ENCODE measurements at regions of chr1 and their contacts with region 1.

Region 1: DNA sequence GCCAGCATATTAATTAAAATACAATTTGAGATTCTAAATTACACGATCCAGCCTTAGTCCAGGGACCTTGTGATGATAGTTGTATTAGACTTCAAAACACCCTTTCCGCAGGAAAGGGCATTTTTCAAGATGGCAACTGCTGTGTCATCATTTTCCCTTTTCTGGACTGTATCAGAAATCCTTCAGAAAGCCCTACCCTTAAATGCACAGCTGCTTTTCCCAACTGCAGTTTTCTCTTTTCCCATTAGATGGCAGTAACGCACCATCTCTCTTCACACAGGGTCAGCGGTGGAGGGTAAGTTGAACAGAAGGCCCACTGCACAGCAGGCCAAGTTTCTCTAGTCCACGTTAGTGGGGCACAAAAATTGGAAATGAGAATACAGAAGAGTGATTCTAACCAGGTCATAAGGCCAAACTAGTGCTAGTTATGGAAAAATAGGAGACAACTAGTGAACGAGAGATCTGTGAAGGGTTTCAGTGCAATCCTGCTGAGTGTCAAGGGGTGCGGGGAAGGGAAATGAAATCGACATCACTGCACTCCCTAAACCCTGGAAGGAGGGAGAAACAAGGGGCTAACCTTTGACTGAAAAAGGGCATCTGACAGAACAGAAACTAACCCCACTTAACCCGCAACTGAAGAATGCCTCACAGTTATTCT is 22.1 kb upstream of the TDRD10 start:
- DNase-seq: peak in 2 of 4 donors; percentile 85 to 89
- ATAC-seq: peak; percentile 85
- H3K4me3 ChIP-seq: no peak overlapping the region
- H3K27ac ChIP-seq: no peak overlapping the region
- H3K4me1 ChIP-seq: peaks cover 13 to 46% of the 10 kb centered on the region in 2 donors
- H3K27me3 ChIP-seq: no peaks in the 10 kb centered on the region
- CTCF ChIP-seq: peak; percentile 85 to 92

Region 2: GRCh38 chr1:154335025-154335714 is 144.7 kb before region 1 on chr1:
- intact Hi-C with region 1: no loop called
- DNase-seq: peak; percentile 65 to 93 (median 85)
- ATAC-seq: peak; percentile 92
- H3K4me3 ChIP-seq: no peak overlapping the region
- H3K27ac ChIP-seq: peak overlapping the region; percentile 42 to 47
- H3K4me1 ChIP-seq: peaks cover 0 to 16% of the 10 kb centered on the region in 2 donors
- H3K27me3 ChIP-seq: no peaks in the 10 kb centered on the region
- CTCF ChIP-seq: peak; percentile 82 to 92

Region 3: GRCh38 chr1:154546264-154547063 is 66.6 kb after region 1 on chr1:
- intact Hi-C with region 1: loop called (anchors 5 to 10 kb)
- DNase-seq: peak in 3 of 4 donors; percentile 42 to 79 (median 60)
- ATAC-seq: peak; percentile 96
- H3K4me3 ChIP-seq: no peak overlapping the region
- H3K27ac ChIP-seq: no peak overlapping the region
- H3K4me1 ChIP-seq: peaks cover 0 to 13% of the 10 kb centered on the region in 2 donors
- H3K27me3 ChIP-seq: no peaks in the 10 kb centered on the region
- CTCF ChIP-seq: peak; percentile 73 to 87

Measured in left lung (tissue), 14 donors.